Posterior vena cava (tissue), 2 donors: ENCODE measurements at regions of chr7 and their contacts with region 1.

Region 1: GRCh38 chr7:30465811-30466180 is 12.8 kb downstream of the NOD1 start:
- DNase-seq: no peak

Region 2: DNA sequence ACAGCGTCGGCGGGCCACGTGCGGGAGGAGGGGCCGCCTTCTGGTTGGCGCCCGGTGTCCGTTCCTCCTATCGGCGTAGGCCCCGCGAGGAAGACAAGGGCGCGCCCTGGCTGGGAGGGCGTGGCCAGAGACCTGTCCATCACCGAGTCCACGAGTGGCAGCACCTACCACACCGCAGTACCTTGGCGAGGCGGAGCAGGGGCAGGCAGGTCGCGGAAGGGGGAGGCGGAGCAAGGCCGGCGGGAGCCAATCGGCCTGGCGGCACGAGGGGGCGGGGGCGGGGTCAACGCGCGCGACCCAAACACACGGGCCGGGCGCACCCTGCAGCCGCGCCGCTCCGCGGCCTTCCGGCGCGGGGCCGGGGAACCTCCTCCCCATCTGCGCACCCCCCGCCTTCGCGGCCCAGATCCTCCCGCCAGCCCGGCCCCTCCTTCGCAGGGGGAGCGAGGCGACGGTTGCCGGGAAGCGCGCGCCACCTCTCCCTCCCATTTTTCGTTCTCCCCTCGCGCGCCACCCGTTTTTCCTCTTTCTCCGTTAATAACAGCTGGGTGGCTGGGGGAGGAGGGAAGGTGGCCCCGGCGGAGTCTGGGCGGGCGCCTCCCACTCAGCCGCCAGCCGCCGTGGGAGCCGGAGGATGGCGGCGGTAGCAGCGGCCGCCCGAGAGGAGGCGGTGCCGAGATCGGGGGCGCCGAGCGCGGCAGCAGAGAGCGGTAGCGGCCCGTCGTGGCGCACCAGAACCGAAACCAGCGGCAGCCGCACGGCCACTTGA is 181.3 kb before region 1 on chr7 and contains the start of gene ZNRF2:
- intact Hi-C with region 1: loop called in 1 of 2 experiments (anchors 2 kb)
- DNase-seq: peak; percentile 99
- total RNA-seq, gene ZNRF2: 12.5 to 13.5 TPM

Region 3: DNA sequence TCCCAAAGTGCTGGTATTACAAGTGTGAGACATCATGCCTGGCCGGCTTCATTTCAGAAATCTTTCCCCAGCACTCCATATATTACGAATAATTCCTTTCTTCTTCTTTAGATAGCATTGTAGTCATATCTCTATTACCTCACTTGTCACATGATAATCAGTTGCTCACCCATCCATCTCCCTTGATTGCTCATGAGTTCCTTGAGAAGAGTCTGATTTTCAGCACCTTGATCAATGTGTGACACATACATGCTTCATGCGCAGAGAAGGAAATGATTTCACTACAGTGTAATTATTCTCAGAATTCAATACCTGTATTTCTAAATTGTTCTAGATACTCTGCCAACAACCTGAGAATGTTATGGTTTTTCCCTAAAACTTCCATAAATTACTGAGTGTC is 65.5 kb after region 1 on chr7:
- intact Hi-C with region 1: no loop called
- DNase-seq: no peak